ENCODE measurements at regions of chr16 and their contacts with region 1.

Region 1: DNA sequence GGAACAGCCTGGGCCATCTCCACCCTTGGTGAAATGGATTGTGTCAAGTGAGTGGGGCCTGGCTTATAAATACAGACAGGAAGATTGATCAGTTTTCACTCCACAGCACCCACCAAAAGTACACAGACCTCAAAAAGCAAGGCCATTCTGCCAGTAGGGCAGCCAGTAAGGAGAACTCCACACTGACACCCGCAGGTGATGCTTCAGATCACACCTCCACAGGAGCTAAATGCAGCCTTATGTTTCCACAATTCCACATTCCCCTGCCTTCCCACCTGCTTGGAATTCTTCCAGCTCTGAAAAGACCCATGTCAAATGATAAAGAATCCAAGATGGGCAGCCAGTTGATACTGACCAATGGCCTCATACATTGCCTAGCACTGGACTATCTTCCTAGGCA is 191.1 kb downstream of the ZFHX3 start:
- DNase-seq: no peak
- ATAC-seq: no peak
- H3K4me3 ChIP-seq: no peak overlapping the region
- H3K27ac ChIP-seq: peak overlapping the region in 1 of 2 donors; percentile 46
- H3K4me1 ChIP-seq: peaks cover 3 to 10% of the 10 kb centered on the region in 2 donors
- H3K27me3 ChIP-seq: no peaks in the 10 kb centered on the region

Region 2: DNA sequence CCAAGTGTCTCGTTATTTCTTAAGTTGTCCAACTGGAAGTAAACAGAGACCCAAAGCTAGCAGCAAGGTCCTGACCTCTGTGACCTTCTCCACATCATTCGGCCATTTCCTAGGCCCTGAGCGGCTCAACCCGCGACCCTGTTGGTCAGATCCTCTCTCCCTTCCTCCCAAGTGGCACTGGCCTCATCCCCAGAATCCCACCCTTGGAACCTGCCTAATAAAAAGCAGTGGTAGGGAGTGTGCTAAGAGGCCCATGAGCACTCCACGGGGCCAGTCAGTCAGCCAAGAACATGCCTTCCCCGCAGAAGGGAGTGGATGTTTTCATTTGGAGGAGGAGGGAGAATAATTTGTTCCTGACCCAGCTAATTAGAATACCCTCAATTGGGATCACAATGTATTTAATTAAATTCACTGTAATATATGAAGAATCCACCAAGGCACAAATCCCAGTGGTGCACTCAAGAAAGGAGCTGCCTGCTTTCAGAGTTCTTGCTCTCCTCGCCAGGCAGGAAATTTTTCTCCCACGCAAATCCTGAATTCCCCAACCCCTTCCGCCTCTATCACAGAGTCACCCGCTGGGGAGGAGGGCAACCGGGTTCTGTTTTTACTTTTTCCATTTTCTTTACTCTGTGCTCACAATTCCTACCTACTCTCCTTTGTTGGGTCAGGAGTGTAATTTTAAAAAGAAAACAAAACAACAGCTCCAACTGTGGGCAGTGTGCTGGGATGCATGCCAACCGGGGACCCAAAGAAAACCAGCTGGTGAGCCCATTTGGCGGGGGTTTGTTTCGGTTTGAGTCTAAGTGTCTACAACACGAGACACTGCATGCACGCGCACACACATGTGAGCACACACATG is 37.7 kb after region 1 on chr16:
- intact Hi-C with region 1: loop called in 1 of 2 experiments (anchors 5 kb)
- DNase-seq: peak in 1 of 2 donors; percentile 56
- ATAC-seq: no peak
- H3K4me3 ChIP-seq: no peak overlapping the region
- H3K27ac ChIP-seq: peak overlapping the region; percentile 46 to 79
- H3K4me1 ChIP-seq: peaks cover 2 to 7% of the 10 kb centered on the region in 2 donors
- H3K27me3 ChIP-seq: no peaks in the 10 kb centered on the region

Measured in aorta (tissue), 5 donors.